Heart left ventricle (tissue), 16 donors: ENCODE measurements at regions of chr11 and their contacts with region 1.

Region 1: DNA sequence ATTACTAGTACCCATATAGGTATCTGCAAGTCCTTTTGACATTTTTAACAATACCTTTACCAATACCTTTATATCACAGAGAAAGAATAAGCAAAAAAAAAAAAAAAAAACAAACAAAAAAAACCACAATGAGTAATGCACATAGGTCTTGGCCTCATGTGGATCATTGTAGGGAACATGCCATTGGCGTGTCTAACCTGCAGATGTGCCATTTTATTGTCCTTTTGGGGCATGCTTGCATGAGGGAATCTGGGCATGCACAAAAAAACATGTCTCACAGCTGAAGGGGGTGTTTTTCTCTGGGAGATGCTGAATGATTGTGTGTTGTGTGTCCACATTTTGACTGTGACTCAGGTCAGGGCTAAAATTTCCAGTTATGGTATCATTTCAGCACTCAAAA is 361.6 kb downstream of the GUCY1A2 start:
- DNase-seq: no peak
- ATAC-seq: no peak
- H3K4me3 ChIP-seq: no peak overlapping the region
- H3K27ac ChIP-seq: no peak overlapping the region
- H3K4me1 ChIP-seq: no peaks in the 10 kb centered on the region
- H3K27me3 ChIP-seq: no peaks in the 10 kb centered on the region
- CTCF ChIP-seq: no peak
- POLR2A ChIP-seq: no peak

Region 2: DNA sequence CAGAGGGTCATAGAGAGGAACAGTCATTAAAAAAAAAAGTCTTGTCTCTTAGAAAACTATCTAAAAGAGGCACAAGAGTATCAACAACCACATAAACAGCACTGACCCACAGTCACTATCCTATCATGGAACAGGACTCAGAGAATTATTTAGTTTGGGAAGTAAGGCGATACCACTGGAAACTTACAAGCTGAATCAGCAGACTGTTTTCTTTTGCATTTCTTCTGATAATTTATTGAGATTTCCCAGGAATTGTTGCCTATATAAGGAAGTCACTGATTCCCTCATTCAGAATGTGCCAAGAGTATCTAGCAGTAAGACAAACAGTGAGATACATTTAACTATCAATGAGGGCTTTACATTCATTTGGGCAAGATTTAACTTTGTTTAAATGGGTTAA is 57.6 kb after region 1 on chr11:
- intact Hi-C with region 1: loop called in 1 of 10 experiments (anchors 10 kb)
- DNase-seq: no peak
- ATAC-seq: no peak
- H3K4me3 ChIP-seq: no peak overlapping the region
- H3K27ac ChIP-seq: no peak overlapping the region
- H3K4me1 ChIP-seq: no peaks in the 10 kb centered on the region
- H3K27me3 ChIP-seq: no peaks in the 10 kb centered on the region
- CTCF ChIP-seq: no peak
- POLR2A ChIP-seq: no peak